PC-9 (cell line): ENCODE measurements at regions of chr4 and their contacts with region 1.

Region 1: GRCh38 chr4:139099366-139099982 is 77.5 kb downstream of the ELF2 start:
- DNase-seq: peak; percentile 47 to 64
- H3K4me3 ChIP-seq: no peak overlapping the region
- H3K27ac ChIP-seq: no peak overlapping the region
- H3K4me1 ChIP-seq: no peaks in the 10 kb centered on the region
- H3K27me3 ChIP-seq: no peaks in the 10 kb centered on the region
- CTCF ChIP-seq: peak; percentile 83

Region 2: DNA sequence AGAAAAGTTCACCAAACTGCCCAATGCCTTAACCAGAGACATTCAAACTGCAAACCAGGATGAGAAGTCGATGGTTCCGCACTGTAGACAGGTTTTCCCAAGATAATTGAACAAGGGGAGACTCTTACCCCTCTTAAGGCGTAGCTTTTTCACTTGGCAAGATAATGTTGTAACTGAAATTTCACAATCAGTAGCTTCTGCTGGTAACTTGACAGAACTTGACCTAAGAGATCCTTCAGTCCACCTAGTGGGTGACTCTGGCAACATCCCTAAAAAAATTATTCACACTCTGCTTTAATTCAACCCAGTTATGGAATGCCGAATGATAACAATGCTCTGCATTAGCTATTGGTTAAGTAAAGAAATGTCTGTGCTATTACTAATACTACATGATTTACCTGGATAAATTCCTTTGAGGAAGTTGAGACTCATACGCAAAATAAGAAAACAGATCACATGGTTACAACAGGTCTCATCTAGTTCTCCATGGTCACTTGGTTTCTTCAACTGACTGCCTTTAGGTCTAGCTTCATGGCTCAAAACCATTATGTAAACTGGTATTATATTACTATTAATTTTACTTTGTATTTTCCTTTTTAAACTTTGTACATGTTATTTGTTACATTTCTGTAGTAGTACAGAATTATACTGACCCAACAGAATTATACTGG is 68.4 kb after region 1 on chr4:
- CTCF ChIA-PET with region 1: no interaction called
- POLR2A ChIA-PET with region 1: no interaction called
- intact Hi-C with region 1: loop called (anchors 1 kb)
- DNase-seq: peak; percentile 11 to 69
- H3K4me3 ChIP-seq: no peak overlapping the region
- H3K27ac ChIP-seq: no peak overlapping the region
- H3K4me1 ChIP-seq: peaks cover 15% of the 10 kb centered on the region
- H3K27me3 ChIP-seq: no peaks in the 10 kb centered on the region
- CTCF ChIP-seq: peak; percentile 63

Region 3: DNA sequence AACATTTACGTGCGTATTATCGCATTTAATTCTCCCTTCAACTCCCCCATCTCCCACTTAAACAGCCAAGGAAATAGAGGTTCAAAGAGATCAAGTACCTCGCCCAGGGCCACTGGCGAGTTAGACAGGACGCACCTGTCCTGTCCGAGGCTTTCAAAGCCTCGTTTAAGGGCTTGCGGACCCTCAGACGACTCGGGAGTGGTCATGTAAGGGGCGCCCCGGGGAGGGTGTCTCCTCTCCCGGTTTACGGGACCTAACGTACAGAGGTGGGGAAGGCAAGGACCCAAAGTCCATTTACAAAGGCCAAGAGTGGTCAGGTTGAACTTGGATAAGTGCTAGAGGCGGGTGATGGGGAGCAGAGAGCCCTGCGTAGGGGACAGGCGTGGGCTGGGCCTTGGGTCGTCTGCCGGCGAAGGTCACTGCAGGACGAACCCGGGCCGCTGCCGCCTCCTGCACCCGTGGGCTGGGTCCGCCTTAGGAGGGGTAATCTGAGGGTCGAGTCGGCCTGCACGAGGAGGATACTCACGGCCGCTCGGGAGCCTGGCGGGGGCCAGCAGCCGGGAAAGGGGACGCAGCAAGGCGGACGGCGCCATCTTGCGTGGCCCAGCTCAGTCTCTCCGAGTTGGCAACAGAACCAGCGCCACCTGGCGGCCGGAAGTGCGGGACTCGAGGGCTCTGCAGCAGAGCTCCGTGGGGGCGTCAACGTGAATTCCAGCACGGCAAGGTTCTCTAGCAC is 195.9 kb after region 1 on chr4:
- CTCF ChIA-PET with region 1: no interaction called
- POLR2A ChIA-PET with region 1: no interaction called
- intact Hi-C with region 1: loop called (anchors 1 kb)
- DNase-seq: peak; percentile 66 to 91
- H3K4me3 ChIP-seq: peak overlapping the region; percentile 78
- H3K27ac ChIP-seq: no peak overlapping the region
- H3K4me1 ChIP-seq: peaks cover 21% of the 10 kb centered on the region
- H3K27me3 ChIP-seq: no peaks in the 10 kb centered on the region
- CTCF ChIP-seq: peak; percentile 85

Region 4: GRCh38 chr4:139470997-139471665 is 371.7 kb after region 1 on chr4:
- CTCF ChIA-PET with region 1: no interaction called
- POLR2A ChIA-PET with region 1: no interaction called
- intact Hi-C with region 1: no loop called
- DNase-seq: no peak
- H3K4me3 ChIP-seq: no peak overlapping the region
- H3K27ac ChIP-seq: no peak overlapping the region
- H3K4me1 ChIP-seq: no peaks in the 10 kb centered on the region
- H3K27me3 ChIP-seq: no peaks in the 10 kb centered on the region
- CTCF ChIP-seq: no peak